Right lobe of liver (tissue), 6 donors: ENCODE measurements at regions of chr4 and their contacts with region 1.

Region 1: DNA sequence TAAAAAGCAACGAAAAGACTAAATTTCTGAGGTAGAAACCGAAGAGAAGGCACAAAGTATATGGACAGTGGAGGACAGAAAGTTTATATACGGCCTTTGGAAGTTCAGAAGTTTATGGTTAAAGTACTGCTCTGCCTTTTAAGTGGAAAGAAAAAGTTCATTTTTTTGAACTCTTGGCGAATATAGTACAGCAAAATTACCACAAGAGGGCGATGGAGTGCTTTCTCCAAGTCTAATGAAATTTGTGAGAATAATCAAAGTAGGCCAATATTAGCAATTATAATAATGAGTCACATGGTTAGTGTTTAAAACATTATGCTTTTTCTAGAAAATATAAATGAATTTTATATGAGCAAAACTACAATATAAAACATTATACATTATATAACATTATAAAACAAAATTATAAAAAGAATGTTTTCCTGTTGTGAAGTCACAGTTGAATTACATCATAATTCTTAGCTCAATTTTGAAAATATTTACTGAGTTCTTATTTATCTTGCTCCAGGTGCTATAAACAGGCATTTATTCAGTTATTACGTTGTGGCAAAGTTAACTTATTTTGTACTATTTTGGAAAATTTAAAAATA is 136.2 kb upstream of the BMPR1B start:
- DNase-seq: no peak
- ATAC-seq: peak; percentile 67 to 85 (median 76)
- H3K4me3 ChIP-seq: no peak overlapping the region
- H3K27ac ChIP-seq: peak overlapping the region in 1 of 3 donors; percentile 26
- H3K4me1 ChIP-seq: no peaks in the 10 kb centered on the region
- H3K27me3 ChIP-seq: no peaks in the 10 kb centered on the region
- CTCF ChIP-seq: peak; percentile 69 to 82 (median 78)
- POLR2A ChIP-seq: no peak

Region 2: GRCh38 chr4:94732358-94732698 is 110.7 kb after region 1 on chr4:
- intact Hi-C with region 1: loop called in 1 of 2 experiments (anchors 10 kb)
- DNase-seq: no peak
- ATAC-seq: no peak
- H3K4me3 ChIP-seq: no peak overlapping the region
- H3K27ac ChIP-seq: no peak overlapping the region
- H3K4me1 ChIP-seq: no peaks in the 10 kb centered on the region
- H3K27me3 ChIP-seq: no peaks in the 10 kb centered on the region
- CTCF ChIP-seq: no peak
- POLR2A ChIP-seq: no peak